ENCODE measurements at regions of chr21 and their contacts with region 1.

Region 1: DNA sequence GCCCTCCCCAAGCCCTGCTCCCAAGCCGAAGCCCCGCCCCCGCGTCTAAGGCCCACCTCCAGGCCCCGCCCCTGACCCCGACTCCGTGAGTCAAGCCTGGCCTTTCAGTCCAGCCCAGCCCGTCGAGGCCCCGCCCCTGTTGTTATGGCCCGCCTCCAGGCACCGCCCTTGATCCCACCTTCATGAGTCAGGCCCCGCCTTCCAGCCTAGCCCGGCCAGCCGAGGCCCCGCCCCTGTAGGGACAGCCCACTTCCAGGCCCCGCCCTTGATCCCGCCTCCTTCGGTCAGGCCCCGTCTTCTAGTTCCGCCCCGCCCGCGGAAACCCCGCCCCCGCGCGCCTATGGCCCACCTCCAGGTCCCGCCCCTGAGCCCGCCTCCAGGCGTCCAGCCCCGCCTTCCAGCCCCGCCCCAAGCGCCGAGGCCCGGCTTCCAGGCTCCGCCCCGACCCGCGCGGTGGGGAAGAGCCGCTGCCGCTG is 247 bp upstream of the DOP1B start:
- DNase-seq: peak; percentile 98
- H3K4me3 Mint-ChIP-seq: peak overlapping the region; percentile 71
- H3K27ac Mint-ChIP-seq: no peak overlapping the region
- H3K4me1 Mint-ChIP-seq: peaks cover 16% of the 10 kb centered on the region
- H3K27me3 Mint-ChIP-seq: no peaks in the 10 kb centered on the region
- CTCF ChIP-seq: no peak

Region 2: GRCh38 chr21:36209626-36210171 is 53.3 kb after region 1 on chr21:
- CTCF ChIA-PET with region 1: interaction called, 17 read pairs
- intact Hi-C with region 1: loop called (anchors 1 kb)
- DNase-seq: peak; percentile 59
- H3K4me3 Mint-ChIP-seq: peak overlapping the region; percentile 51
- H3K27ac Mint-ChIP-seq: peak overlapping the region; percentile 76
- H3K4me1 Mint-ChIP-seq: peaks cover 30% of the 10 kb centered on the region
- H3K27me3 Mint-ChIP-seq: no peaks in the 10 kb centered on the region
- CTCF ChIP-seq: peak; percentile 44

Region 3: DNA sequence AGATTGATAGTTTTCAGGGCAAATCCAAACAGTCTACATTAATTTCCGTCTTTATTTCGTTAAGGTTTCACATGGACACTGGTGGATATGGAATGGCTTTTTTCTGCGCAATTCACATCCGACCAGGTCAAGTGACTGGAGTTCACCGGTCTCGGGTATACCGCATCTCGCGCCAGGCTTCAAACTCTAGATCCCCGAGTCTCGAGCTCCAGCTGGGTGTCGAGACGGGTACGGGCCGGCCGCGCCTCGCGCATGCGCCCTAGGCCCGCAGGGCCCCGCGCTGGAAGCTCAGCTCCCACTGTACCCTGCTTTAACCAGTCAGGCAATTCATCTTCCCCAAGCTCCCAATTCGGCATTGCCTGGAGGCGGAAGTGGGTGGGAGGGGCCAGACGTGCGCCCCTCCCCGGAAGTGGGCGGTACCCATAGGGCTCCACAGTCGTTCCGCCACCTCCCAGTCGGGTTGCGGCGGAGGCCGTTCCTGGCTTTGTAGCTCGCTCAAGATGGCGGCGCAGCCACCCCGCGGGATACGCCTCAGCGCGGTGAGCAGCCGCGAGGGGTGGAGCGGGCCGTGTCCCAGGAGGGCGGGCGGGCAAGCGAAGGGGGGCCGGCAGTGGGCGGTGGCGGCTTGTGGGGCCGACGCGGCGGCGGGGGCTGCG is 163.5 kb after region 1 on chr21 and contains the start of gene MORC3:
- CTCF ChIA-PET with region 1: interaction called, 3 read pairs
- intact Hi-C with region 1: loop called (anchors 5 kb)
- DNase-seq: peak; percentile 95
- H3K4me3 Mint-ChIP-seq: peak within 1 kb of the TSS; percentile 77
- H3K27ac Mint-ChIP-seq: peak within 1 kb of the TSS; percentile 90
- H3K4me1 Mint-ChIP-seq: peaks cover 21% of the 10 kb centered on the region
- H3K27me3 Mint-ChIP-seq: peaks cover 6% of the 10 kb centered on the region
- CTCF ChIP-seq: no peak
- total RNA-seq, gene MORC3: 18.2 and 20.2 TPM in 2 replicates

Region 4: DNA sequence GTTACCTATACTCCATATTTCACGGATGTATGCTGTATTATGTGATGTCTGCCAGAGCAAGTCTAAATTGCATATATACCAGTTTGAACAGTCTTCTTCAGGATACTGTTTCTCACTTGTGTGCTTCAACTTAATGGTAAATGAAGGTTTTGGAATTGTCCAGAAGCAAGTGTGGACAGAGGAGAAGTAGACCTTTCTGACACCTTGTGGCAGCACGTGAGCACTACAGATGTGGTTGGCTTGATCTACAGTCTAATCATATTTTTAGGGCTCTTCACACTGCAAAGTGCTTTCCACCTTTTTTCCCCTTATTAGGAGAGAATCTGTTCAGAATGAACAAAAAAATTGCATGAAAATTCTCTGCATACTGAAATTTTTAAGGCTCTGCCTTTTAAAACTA is 174.5 kb after region 1 on chr21:
- CTCF ChIA-PET with region 1: interaction called, 3 read pairs
- intact Hi-C with region 1: loop called (anchors 1 kb)
- DNase-seq: peak; percentile 31
- H3K4me3 Mint-ChIP-seq: no peak overlapping the region
- H3K27ac Mint-ChIP-seq: no peak overlapping the region
- H3K4me1 Mint-ChIP-seq: peaks cover 12% of the 10 kb centered on the region
- H3K27me3 Mint-ChIP-seq: no peaks in the 10 kb centered on the region
- CTCF ChIP-seq: peak; percentile 22